ENCODE measurements at regions of chr9 and their contacts with region 1.

Region 1: DNA sequence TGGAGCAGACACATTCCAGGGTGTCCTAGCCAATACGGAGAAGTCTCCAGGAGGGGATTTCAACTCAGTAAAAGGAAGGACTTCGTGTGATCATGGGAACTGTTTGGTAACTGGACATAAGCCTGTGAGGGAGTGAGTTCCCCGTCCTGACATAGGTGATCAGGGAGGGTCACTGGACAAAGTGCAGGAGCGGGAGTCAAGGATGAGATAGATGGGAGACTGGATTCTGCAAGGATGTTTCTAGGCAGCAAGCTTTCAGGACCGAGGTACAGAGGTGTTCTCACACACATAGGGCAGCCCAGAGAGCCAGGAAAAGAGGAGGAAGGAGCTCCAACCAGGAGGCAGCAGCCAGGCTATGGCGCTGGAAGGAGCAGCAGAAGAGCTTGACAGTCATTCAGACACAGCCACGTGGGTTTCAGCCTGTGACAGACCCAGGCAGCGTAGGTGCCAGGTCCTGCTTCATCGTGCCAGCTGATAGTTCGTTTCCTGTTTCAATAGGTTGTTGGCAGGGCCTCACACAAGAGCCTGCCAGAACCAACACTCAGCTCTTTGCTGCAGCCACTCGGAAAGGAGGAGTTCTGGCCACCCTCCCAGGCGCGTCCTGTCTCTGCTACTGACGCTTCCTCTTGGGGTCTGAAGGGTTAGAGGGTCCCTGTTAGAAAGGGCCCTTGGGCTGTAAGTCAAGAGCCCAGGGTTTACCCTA is 84.1 kb downstream of the AMBP start:
- DNase-seq: peak; percentile 85
- H3K4me3 ChIP-seq: no peak overlapping the region
- H3K27ac ChIP-seq: peak overlapping the region in 4 of 8 donors; percentile 14 to 45 (median 28)
- H3K4me1 ChIP-seq: peaks cover 31 to 56% (median 44%) of the 10 kb centered on the region in 6 donors
- H3K27me3 ChIP-seq: no peaks in the 10 kb centered on the region
- CTCF ChIP-seq: no peak
- POLR2A ChIP-seq: no peak

Region 2: DNA sequence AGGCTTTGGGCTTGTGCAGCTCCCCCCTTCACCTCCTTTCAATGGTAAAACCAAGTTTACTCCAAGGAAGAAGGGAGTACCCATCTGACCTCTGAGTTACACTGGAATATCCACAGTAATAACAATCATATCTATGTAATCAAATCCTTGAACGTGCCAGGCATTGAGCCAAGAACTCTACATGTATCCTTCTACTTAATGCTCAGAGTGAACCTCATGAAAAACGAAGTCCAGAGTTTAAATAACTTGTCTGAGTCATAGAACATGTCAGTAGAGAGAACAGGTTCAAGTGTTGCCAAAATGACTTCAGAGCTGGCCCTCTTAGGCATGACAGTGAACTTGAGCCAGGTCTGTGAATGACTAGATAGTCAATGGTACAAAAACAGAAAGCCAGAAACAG is 282.0 kb before region 1 on chr9:
- intact Hi-C with region 1: no loop called
- DNase-seq: no peak
- H3K4me3 ChIP-seq: no peak overlapping the region
- H3K27ac ChIP-seq: no peak overlapping the region
- H3K4me1 ChIP-seq: no peaks in the 10 kb centered on the region
- H3K27me3 ChIP-seq: peaks cover 0 to 12% (median 0%) of the 10 kb centered on the region in 7 donors
- CTCF ChIP-seq: no peak
- POLR2A ChIP-seq: no peak

Region 3: GRCh38 chr9:113886466-113886865 is 107.5 kb before region 1 on chr9:
- intact Hi-C with region 1: loop called (anchors 10 kb)
- DNase-seq: no peak
- H3K4me3 ChIP-seq: peak overlapping the region in 7 of 8 donors; percentile 10 to 54 (median 17)
- H3K27ac ChIP-seq: peak overlapping the region; percentile 36 to 78 (median 63)
- H3K4me1 ChIP-seq: peaks cover 6 to 43% (median 28%) of the 10 kb centered on the region in 6 donors
- H3K27me3 ChIP-seq: no peaks in the 10 kb centered on the region
- CTCF ChIP-seq: no peak
- POLR2A ChIP-seq: no peak

Region 4: GRCh38 chr9:114047717-114048116 is 53.7 kb after region 1 on chr9:
- intact Hi-C with region 1: no loop called
- DNase-seq: no peak
- H3K4me3 ChIP-seq: no peak overlapping the region
- H3K27ac ChIP-seq: no peak overlapping the region
- H3K4me1 ChIP-seq: no peaks in the 10 kb centered on the region
- H3K27me3 ChIP-seq: no peaks in the 10 kb centered on the region
- CTCF ChIP-seq: peak in 1 of 11 experiments; percentile 10
- POLR2A ChIP-seq: no peak

Region 5: DNA sequence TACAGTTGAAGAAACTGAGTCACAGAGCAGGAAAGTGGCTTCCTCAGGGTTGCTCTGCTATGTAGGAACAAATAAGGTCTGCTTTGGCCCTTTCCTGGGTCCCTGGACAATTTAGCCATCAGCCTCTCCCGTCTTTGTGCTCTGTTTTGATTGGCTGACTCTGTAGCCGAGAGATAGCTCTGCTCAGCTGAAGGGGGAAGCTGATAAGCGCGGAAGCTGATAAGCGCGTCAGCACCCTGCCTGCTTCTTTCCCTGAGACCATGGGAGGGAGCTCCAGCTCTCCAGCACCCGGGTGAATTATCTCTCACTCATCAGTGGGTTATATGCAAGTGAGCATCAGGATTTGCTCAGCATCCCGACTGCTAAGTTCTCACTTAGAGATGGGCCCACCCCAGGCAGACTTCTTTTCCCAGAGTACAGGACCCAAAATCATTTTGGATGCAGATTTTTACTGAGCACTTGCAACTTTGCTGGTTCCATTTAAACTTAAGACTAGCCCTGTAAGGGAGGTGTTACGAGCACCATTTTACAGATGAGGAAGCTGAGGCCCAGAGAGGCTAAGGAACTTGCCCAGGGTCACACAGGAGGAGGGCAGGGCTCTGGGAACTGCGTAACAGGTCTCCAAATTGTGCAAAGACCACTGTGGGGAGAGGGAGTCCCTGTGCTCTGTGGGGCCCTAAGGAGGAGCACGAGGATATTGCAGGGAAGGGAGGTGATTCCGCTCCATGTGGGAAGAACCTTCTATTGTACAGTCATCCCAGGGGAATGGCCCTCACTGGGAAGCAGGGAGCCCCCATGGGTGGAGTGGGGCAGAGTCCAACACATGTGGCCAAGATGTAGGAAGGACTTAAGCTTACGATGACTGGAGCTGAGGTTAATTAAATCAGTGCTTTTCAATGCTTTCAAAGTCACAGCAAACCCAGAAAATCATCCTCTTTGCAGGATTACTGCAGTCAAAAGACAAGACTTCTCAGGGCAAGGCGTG is 245.2 kb after region 1 on chr9:
- intact Hi-C with region 1: no loop called
- DNase-seq: no peak
- H3K4me3 ChIP-seq: no peak overlapping the region
- H3K27ac ChIP-seq: no peak overlapping the region
- H3K4me1 ChIP-seq: peaks cover 0 to 4% (median 0%) of the 10 kb centered on the region in 6 donors
- H3K27me3 ChIP-seq: peaks cover 0 to 16% (median 0%) of the 10 kb centered on the region in 7 donors
- CTCF ChIP-seq: no peak
- POLR2A ChIP-seq: no peak